HCT116 (cell line): ENCODE measurements at regions of chr21 and their contacts with region 1.

Region 1: GRCh38 chr21:15430577-15430976 is 299.2 kb upstream of the USP25 start:
- DNase-seq: no peak
- ATAC-seq: no peak
- H3K4me3 ChIP-seq: no peak overlapping the region
- H3K27ac ChIP-seq: no peak overlapping the region
- H3K4me1 ChIP-seq: no peaks in the 10 kb centered on the region
- H3K27me3 ChIP-seq: no peaks in the 10 kb centered on the region
- CTCF ChIP-seq: no peak
- POLR2A ChIP-seq: no peak
- RAD21 ChIP-seq: no peak

Region 2: DNA sequence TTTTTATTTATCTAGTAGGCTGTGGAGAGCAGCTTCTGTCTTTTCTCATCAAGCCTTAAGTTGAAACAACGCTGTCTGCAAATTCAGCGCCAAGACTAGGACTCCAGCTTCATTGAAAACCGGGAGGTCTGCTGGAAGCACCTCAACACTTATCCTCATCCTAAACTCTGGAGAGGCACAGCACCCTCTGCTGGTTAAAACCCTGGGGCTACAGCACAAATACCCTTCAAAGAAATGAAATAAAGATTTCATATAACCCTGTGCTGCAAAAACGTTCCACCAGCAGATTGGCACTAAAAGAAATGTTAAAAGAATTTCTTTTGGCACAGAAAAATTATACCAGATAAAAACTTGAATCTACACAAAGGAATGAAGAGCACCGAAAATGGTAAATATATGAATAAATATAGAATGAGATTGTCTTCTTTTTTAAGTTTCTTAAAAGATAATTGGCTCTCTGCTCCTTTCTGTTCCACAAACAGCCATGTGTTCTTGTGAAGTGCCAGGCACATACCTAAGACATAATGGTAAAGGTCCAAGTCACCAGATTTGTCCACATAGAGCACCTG is 656.7 kb before region 1 on chr21:
- CTCF ChIA-PET with region 1: no interaction called
- POLR2A ChIA-PET with region 1: no interaction called
- RAD21 ChIA-PET with region 1: no interaction called
- intact Hi-C with region 1: no loop called
- DNase-seq: peak; percentile 29
- ATAC-seq: 0 out of 2 replicates have a peak, but pooled peaks have one; percentile 40
- H3K4me3 ChIP-seq: no peak overlapping the region
- H3K27ac ChIP-seq: no peak overlapping the region
- H3K4me1 ChIP-seq: no peaks in the 10 kb centered on the region
- H3K27me3 ChIP-seq: no peaks in the 10 kb centered on the region
- CTCF ChIP-seq: peak; percentile 16 to 59 (median 56); a peak in 5 of 6 replicates
- POLR2A ChIP-seq: no peak
- RAD21 ChIP-seq: peak; percentile 42

Region 3: DNA sequence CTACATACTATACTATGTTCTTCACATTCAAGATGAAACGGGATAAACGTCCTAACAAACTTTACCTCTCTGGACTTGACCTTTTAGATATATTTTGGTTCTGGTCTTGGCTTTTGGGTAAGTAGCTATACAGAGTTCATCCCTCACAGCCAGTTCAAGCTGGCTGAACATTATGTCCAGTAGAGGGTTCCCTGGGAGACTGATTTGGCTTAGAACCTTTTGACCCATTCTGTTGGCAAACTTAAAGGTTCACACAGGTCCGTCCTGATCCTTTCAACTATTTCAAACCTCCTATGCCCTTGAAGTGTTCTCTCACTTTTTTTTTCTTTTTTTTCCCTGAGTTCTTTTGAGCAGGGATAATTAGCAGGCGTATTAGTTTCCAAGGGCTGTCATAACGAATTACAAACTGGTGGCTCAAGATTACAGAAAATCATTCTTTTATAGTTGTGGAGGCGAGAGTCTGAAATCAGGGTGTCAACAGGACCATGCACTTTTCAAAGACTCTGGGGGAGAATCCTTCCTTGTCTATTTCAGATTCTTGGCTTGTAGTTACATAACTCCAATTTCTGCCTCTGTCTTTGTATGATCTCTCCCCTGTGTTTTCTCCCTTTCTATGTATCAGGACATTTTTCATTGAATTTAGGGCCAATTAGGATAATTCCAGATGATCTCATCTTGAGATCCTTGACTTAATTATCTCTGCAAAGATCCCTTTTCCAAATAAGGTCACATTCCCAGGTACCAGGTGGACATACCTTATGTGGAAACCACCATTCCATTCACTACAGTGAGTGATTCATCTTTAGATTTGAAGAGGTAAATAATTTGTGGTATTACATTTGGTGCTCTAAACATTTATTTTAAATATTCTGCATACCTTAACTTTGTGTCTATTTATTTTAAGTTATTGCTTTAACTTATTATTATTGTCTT is 41.8 kb after region 1 on chr21:
- CTCF ChIA-PET with region 1: no interaction called
- POLR2A ChIA-PET with region 1: no interaction called
- RAD21 ChIA-PET with region 1: no interaction called
- intact Hi-C with region 1: no loop called
- DNase-seq: no peak
- ATAC-seq: no peak
- H3K4me3 ChIP-seq: no peak overlapping the region
- H3K27ac ChIP-seq: no peak overlapping the region
- H3K4me1 ChIP-seq: no peaks in the 10 kb centered on the region
- H3K27me3 ChIP-seq: no peaks in the 10 kb centered on the region
- CTCF ChIP-seq: no peak
- POLR2A ChIP-seq: no peak
- RAD21 ChIP-seq: no peak

Region 4: GRCh38 chr21:16279731-16280581 is 849.4 kb after region 1 on chr21:
- CTCF ChIA-PET with region 1: no interaction called
- POLR2A ChIA-PET with region 1: no interaction called
- RAD21 ChIA-PET with region 1: no interaction called
- intact Hi-C with region 1: loop called (anchors 5 kb)
- DNase-seq: no peak
- ATAC-seq: no peak
- H3K4me3 ChIP-seq: no peak overlapping the region
- H3K27ac ChIP-seq: no peak overlapping the region
- H3K4me1 ChIP-seq: no peaks in the 10 kb centered on the region
- H3K27me3 ChIP-seq: no peaks in the 10 kb centered on the region
- CTCF ChIP-seq: no peak
- POLR2A ChIP-seq: no peak
- RAD21 ChIP-seq: no peak